ENCODE measurements at regions of chr4 and their contacts with region 1.

Region 1: GRCh38 chr4:85474818-85475630 is at the start of gene ARHGAP24:
- DNase-seq: peak; percentile 89
- ATAC-seq: peak; percentile 97 to 99
- total RNA-seq, gene ARHGAP24: 30.2 to 38.3 TPM

Region 2: GRCh38 chr4:85445050-85445639 is 29.9 kb before region 1 on chr4:
- intact Hi-C with region 1: no loop called
- DNase-seq: no peak
- ATAC-seq: no peak

Region 3: GRCh38 chr4:85522277-85522676 is 47.3 kb after region 1 on chr4:
- intact Hi-C with region 1: loop called in 1 of 2 experiments (anchors 5 kb)
- DNase-seq: no peak
- ATAC-seq: peak in 1 of 2 donors; percentile 30

Measured in left cardiac atrium (tissue), 4 donors.